Activated CD4-positive, alpha-beta T cell treated with anti-CD3 and anti-CD28 coated beads, Interleukin-2, amount 10 ng/mL, durations not matched to agents 24 days and 14 days (primary cell): ENCODE measurements at regions of chr6 and their contacts with region 1.

Region 1: DNA sequence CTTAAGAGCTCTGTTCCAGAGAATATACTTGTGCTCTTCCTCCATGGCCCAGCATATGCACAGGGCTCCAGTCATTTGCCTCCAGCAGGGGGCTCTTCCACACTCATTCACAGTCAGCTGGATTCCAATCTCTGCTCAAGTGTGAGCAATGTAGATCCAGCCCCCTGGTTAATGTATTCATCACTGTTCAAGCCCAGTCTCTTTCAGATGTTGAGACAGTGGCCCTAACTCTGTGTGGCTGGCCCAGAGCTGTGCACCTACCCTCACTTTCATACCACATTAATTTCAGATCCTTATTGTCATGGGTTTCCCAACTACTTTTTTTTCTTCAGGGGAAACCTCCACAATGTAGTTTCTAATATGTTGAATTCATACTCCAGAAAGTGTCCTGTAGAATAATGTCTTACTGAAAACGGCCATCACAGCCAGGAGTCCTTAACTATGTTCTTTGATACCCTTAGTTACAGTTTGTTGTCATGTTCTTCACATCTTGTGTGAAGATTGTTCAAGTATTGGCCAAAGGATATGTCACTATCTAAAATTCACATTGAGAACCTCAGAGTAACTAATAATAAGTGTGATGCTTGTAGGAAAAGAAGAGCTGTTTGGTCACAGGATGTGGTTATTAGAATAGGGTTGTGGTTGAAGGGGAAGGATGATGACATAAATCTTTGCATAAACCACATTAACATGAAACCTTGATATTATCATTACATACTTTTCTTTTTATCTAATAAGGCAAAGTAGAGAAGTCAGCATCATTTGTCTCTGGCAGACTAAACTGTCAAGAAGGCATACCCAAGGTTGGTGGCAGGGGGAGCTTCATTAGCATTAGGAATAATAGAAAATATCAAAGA is 14.4 kb upstream of the HLA-DQA1 start:
- DNase-seq: peak; percentile 78
- H3K4me3 Mint-ChIP-seq: peak overlapping the region; percentile 59
- H3K27ac Mint-ChIP-seq: peak overlapping the region; percentile 85
- H3K4me1 Mint-ChIP-seq: peaks cover 43% of the 10 kb centered on the region
- H3K27me3 Mint-ChIP-seq: no peaks in the 10 kb centered on the region

Region 2: GRCh38 chr6:32609731-32610640 is 12.8 kb before region 1 on chr6:
- intact Hi-C with region 1: loop called (anchors 1 kb)
- DNase-seq: peak; percentile 89
- H3K4me3 Mint-ChIP-seq: no peak overlapping the region
- H3K27ac Mint-ChIP-seq: no peak overlapping the region
- H3K4me1 Mint-ChIP-seq: peaks cover 7% of the 10 kb centered on the region
- H3K27me3 Mint-ChIP-seq: peaks cover 12% of the 10 kb centered on the region

Region 3: GRCh38 chr6:32685603-32686002 is 62.8 kb after region 1 on chr6:
- intact Hi-C with region 1: loop called (anchors 1 kb)
- DNase-seq: peak; percentile 87
- H3K4me3 Mint-ChIP-seq: peak overlapping the region; percentile 38
- H3K27ac Mint-ChIP-seq: peak overlapping the region; percentile 27
- H3K4me1 Mint-ChIP-seq: peaks cover 23% of the 10 kb centered on the region
- H3K27me3 Mint-ChIP-seq: peaks cover 16% of the 10 kb centered on the region

Region 4: DNA sequence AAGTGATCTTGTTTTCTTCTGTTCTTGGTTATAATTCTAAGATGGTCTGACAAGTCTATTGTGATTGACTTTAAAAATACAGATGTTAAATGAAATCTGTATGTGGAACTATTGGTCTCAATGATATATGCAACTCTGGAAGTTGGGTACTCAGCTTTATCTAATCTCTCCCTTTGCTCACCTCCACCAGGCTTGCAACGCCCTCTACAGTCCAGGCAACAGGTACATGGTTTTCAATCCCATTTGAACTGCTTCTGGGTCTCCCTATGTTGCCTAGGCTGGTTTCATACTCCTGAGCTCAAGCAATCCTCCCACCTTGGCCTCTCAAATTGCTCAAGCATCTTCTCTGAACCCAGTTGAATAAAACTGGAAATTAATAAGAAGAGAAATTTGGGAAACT is 69.2 kb after region 1 on chr6:
- intact Hi-C with region 1: loop called (anchors 2 kb)
- DNase-seq: peak; percentile 86
- H3K4me3 Mint-ChIP-seq: no peak overlapping the region
- H3K27ac Mint-ChIP-seq: no peak overlapping the region
- H3K4me1 Mint-ChIP-seq: peaks cover 12% of the 10 kb centered on the region
- H3K27me3 Mint-ChIP-seq: peaks cover 41% of the 10 kb centered on the region

Region 5: GRCh38 chr6:32752580-32752979 is 129.8 kb after region 1 on chr6:
- intact Hi-C with region 1: no loop called
- DNase-seq: no peak
- H3K4me3 Mint-ChIP-seq: no peak overlapping the region
- H3K27ac Mint-ChIP-seq: no peak overlapping the region
- H3K4me1 Mint-ChIP-seq: no peaks in the 10 kb centered on the region
- H3K27me3 Mint-ChIP-seq: peaks cover 43% of the 10 kb centered on the region

Region 6: DNA sequence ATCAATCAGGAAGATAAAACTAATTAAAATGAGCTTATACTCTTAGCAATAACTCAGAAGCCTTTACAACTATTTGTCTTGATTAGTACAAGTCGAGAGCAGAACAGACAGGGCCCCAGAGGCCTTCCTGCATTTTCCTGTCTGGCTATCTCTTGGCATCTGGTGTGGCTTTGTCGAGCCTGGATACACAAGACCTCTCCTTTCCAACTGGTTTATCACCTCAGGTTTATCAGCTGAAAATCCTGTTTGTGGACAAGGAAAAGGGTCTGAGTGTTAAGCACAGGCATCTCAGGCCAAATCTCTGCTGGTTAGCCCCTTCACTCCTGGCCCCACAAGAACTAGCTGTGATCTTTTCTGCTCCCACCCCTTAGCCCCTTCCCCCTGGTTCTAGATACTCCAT is 924.7 kb after region 1 on chr6:
- intact Hi-C with region 1: no loop called
- DNase-seq: no peak
- H3K4me3 Mint-ChIP-seq: peak overlapping the region; percentile 37
- H3K27ac Mint-ChIP-seq: peak overlapping the region; percentile 61
- H3K4me1 Mint-ChIP-seq: peaks cover 15% of the 10 kb centered on the region
- H3K27me3 Mint-ChIP-seq: no peaks in the 10 kb centered on the region